GM10248 (cell line): ENCODE measurements at regions of chr17 and their contacts with region 1.

Region 1: GRCh38 chr17:31508288-31509094 is 117.0 kb downstream of the RAB11FIP4 start:
- DNase-seq: peak; percentile 73
- CTCF ChIP-seq: peak; percentile 58

Region 2: GRCh38 chr17:31492880-31493655 is 15.4 kb before region 1 on chr17:
- CTCF ChIA-PET with region 1: interaction called, 30 read pairs
- POLR2A ChIA-PET with region 1: no interaction called
- DNase-seq: peak; percentile 80
- CTCF ChIP-seq: no peak

Region 3: GRCh38 chr17:31524926-31525800 is 16.7 kb after region 1 on chr17:
- CTCF ChIA-PET with region 1: interaction called, 35 read pairs
- POLR2A ChIA-PET with region 1: no interaction called
- DNase-seq: peak; percentile 88
- CTCF ChIP-seq: peak; percentile 90

Region 4: GRCh38 chr17:31561469-31562375 is 53.2 kb after region 1 on chr17:
- CTCF ChIA-PET with region 1: no interaction called
- POLR2A ChIA-PET with region 1: no interaction called
- DNase-seq: no peak
- CTCF ChIP-seq: no peak

Region 5: DNA sequence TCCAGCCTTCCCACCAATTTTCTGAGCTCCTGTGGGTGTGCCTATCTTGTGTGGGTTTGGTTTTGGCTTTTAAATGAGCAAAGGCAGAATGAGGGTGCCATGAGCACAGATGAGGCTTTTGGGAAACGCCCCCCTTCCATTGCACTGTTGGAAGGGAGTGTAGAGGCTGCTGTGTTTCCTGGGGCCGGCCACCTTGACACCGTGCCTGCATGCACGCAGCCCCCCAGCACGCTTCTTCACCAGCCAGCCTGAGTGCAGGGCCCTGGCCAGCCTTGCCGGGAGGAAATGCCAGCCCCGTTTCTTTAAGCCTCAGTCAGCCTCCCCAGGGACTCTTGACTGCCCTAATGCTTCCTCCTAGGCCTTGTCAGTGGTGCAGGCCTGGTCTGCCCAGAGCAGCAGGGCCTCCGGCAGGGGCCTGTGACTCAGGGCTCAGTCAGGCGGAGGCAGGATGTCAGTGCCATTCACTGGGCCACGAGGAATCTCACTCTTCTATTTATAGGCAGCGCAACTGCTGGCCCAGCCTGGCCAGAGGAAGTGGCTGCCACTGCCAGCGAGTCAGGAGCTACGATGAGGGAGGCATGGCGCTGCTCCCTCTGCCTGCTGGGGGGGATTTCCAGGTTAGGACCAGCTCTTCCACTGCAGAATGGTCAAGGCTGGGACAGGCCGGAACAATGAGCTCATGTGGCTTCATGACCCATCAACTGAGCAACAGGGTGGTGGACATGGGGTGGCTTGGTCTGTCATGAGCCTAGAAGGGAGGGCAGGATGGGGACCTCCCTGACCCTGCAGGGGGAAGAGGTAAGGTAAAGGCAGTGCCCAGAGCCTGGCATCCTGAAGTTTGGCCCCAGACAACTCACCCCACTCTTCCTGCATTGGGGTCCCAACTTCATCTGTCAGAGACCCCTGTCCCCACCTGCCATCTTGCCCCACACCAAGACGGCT is 88.2 kb after region 1 on chr17:
- CTCF ChIA-PET with region 1: no interaction called
- POLR2A ChIA-PET with region 1: no interaction called
- DNase-seq: peak; percentile 53
- CTCF ChIP-seq: no peak